HCT116 (cell line): ENCODE measurements at regions of chr2 and their contacts with region 1.

Region 1: DNA sequence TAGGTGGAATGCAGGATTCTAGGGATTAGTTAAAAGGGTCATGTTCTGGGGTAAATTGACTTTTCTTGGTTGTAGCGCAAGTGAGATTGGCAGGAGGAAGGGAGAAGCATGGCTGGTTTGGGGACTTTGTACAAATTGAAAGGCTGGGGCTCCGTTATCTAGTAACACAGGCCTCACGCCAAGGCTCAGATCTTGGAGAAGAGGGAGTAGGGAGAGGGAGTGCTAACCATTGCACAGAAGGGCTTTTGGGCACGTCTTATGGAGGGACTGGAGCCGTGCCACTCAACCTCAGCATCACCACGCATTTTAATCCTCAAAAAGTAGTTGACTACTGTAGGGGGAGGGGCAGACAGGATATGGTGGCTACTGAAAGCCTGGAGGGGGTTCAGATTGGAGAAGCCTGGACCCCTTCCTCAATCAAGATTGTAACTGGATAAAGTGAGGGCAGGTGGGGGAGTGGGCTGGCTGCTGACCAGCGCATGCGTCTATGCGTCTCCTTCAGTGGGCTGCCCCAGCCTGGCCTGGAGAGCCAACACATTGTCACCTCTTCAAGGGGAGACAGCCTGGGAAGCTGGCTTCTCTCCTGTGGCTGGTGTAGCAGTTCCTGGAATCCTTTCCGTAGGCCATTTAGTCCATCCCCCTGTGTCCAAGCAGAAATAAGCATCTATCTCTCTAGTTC is 14.3 kb downstream of the IGFBP5 start:
- DNase-seq: no peak
- ATAC-seq: no peak
- H3K4me3 ChIP-seq: no peak overlapping the region
- H3K27ac ChIP-seq: no peak overlapping the region
- H3K4me1 ChIP-seq: peaks cover 10% of the 10 kb centered on the region in 2 experiments
- H3K27me3 ChIP-seq: no peaks in the 10 kb centered on the region
- CTCF ChIP-seq: no peak
- POLR2A ChIP-seq: no peak
- RAD21 ChIP-seq: no peak

Region 2: DNA sequence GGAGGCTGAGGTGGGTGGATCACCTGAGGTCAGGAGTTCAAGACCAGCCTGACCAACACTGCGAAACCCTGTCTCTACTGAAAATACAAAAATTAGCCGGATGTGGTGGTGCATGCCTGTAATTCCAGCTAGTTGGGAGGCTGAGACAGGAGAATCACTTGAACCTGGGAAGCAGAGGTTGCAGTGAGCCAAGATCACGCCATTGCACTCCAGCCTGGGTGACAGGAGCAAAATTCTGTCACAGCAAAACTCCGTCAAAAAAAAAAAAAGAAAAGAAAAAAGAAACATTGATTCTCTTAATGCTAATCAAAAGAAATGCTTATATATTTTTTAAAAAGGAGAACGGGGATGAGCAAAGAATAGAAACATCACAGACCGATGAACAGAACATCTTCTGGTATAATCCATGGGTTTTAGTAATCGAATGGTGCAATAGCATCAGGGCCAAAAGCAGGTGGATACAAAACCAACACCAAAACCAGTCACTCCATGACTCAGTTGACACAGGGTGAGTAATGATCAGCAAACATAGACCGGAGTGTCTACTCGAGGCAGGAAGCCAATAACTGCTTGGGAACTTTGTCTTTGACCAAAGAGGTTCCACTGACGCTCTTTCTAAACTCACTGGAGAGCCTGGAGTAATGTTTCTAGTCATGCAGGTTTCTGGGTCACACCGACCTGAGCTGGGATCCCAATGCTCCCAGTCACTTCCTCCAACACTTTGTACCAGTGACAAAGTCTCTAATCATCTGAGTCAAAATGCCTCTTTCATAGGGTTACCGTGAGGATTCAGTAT is 698.8 kb before region 1 on chr2:
- CTCF ChIA-PET with region 1: no interaction called
- POLR2A ChIA-PET with region 1: no interaction called
- RAD21 ChIA-PET with region 1: no interaction called
- intact Hi-C with region 1: no loop called
- DNase-seq: peak; percentile 62
- ATAC-seq: peak; percentile 64
- H3K4me3 ChIP-seq: no peak overlapping the region
- H3K27ac ChIP-seq: no peak overlapping the region
- H3K4me1 ChIP-seq: peaks cover 0 to 17% of the 10 kb centered on the region in 2 experiments; a peak in 2 of 4 replicates
- H3K27me3 ChIP-seq: no peaks in the 10 kb centered on the region
- CTCF ChIP-seq: no peak
- POLR2A ChIP-seq: no peak
- RAD21 ChIP-seq: 0 out of 2 replicates have a peak, but pooled peaks have one; percentile 6

Region 3: GRCh38 chr2:216328347-216328746 is 352.7 kb before region 1 on chr2:
- CTCF ChIA-PET with region 1: no interaction called
- POLR2A ChIA-PET with region 1: no interaction called
- RAD21 ChIA-PET with region 1: no interaction called
- intact Hi-C with region 1: no loop called
- DNase-seq: no peak
- ATAC-seq: peak; percentile 68
- H3K4me3 ChIP-seq: no peak overlapping the region
- H3K27ac ChIP-seq: no peak overlapping the region
- H3K4me1 ChIP-seq: no peaks in the 10 kb centered on the region
- H3K27me3 ChIP-seq: no peaks in the 10 kb centered on the region; the same call in 1 of the 2 replicates
- CTCF ChIP-seq: peak; percentile 15 to 25 (median 18); a peak in 1 of 6 replicates
- POLR2A ChIP-seq: no peak
- RAD21 ChIP-seq: peak; percentile 46

Region 4: DNA sequence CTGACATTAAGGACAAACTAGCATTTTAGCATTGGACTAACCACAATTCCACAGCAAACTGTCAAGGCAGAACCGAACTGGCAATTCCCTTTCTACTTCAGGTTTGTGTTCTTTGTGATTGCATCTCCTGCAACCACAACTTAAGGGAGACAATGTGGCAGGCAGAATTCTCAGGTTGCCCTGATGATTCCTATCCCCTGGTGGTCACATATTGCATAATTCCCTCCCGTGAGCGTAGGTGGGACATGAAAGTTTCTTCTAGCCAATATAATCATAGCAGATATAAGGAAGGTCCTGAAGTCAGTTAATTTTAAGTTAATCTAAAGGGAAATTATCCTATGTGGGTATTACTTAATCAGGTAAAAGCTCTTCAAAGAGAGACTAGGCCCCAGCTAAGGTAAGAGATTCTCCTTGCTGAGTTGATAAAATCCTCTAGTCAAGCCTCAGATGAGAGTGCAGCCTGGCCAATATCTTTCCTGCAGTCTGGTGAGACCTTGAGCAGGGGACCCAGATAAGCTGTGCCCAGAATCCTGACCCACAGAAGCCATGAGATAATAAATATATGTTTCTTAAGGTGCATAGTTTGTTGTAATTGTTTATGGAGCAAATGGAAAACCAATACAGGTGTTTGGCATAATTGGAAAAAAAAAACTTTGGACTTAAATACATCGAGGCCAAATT is 224.7 kb after region 1 on chr2:
- CTCF ChIA-PET with region 1: no interaction called
- POLR2A ChIA-PET with region 1: no interaction called
- RAD21 ChIA-PET with region 1: no interaction called
- intact Hi-C with region 1: no loop called
- DNase-seq: no peak
- ATAC-seq: no peak; the same call in 1 of the 2 replicates
- H3K4me3 ChIP-seq: no peak overlapping the region
- H3K27ac ChIP-seq: no peak overlapping the region
- H3K4me1 ChIP-seq: no peaks in the 10 kb centered on the region
- H3K27me3 ChIP-seq: peaks cover 12% of the 10 kb centered on the region; the same call in 1 of the 2 replicates
- CTCF ChIP-seq: peak in 2 of 3 experiments; percentile 31 to 38; a peak in 4 of 6 replicates
- POLR2A ChIP-seq: no peak
- RAD21 ChIP-seq: no peak

Region 5: DNA sequence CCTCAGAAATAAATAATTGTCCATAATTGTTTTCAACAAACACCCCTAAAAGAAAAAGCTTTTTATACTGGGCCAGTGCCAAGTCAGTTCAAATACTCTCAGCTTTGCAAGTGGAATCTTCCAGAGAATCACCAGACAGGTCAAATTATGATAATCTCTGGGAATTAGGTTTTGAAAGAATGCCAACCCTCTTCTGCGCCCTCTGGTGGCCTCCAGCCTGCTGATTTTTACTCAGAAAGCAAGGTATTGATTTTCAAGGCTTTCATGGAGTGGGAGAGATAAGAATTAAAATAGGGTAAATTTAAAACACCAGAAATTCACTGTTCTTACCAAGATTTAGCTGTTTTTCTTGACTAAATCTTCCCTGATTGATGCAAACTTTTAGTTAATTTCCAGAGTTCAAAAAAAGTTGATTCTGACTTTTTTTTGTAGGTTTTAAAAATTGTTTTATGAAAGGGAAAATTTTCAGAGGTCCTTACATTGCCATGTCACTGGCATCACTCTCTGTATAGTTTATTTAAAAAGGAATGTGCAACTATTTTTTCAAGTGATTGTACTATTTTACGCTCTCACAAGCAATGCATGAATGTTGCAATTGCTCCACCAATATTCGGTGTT is 461.7 kb after region 1 on chr2:
- CTCF ChIA-PET with region 1: no interaction called
- POLR2A ChIA-PET with region 1: no interaction called
- RAD21 ChIA-PET with region 1: no interaction called
- intact Hi-C with region 1: loop called (anchors 1 kb)
- DNase-seq: peak; percentile 29
- ATAC-seq: peak; percentile 64
- H3K4me3 ChIP-seq: no peak overlapping the region
- H3K27ac ChIP-seq: no peak overlapping the region
- H3K4me1 ChIP-seq: no peaks in the 10 kb centered on the region
- H3K27me3 ChIP-seq: peaks cover 22% of the 10 kb centered on the region
- CTCF ChIP-seq: peak; percentile 75 to 88 (median 83); a peak in 5 of 6 replicates
- POLR2A ChIP-seq: no peak
- RAD21 ChIP-seq: peak; percentile 74

Region 6: DNA sequence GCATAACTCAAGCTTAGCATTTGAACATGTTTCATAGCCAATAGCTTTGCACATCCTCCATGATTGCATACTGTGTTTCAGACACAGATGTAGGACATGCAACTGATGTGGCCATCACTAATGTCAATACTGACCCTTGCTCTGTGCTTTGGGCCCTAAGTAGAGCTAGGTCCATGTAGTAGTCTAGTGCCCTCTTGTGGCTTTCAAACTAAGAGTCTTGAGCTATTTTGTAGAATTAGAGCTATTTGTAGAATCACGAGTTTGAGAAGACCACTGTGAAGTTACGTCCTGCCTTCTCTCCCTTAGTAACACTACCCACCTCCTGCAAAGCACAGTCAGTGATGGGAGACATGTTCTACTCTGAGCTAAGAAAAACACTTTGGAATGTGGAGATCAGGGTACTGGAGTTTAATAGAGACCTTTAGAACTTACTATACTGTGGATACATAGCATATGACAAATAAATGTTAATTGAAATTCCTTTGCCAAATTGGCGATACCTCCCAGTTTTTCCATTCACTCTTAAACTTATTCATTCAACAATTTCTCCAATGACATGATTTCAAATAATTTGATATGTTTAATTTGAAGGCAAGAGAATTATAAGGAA is 485.3 kb after region 1 on chr2:
- CTCF ChIA-PET with region 1: interaction called, 18 read pairs
- POLR2A ChIA-PET with region 1: no interaction called
- RAD21 ChIA-PET with region 1: no interaction called
- intact Hi-C with region 1: loop called (anchors 1 kb)
- DNase-seq: peak; percentile 32
- ATAC-seq: peak; percentile 76
- H3K4me3 ChIP-seq: no peak overlapping the region
- H3K27ac ChIP-seq: no peak overlapping the region
- H3K4me1 ChIP-seq: peaks cover 0 to 6% of the 10 kb centered on the region in 2 experiments; a peak in 2 of 4 replicates
- H3K27me3 ChIP-seq: peaks cover 27% of the 10 kb centered on the region
- CTCF ChIP-seq: peak; percentile 49 to 65 (median 61); a peak in 5 of 6 replicates
- POLR2A ChIP-seq: no peak
- RAD21 ChIP-seq: peak; percentile 74

Region 7: GRCh38 chr2:217685255-217685605 is 1004.1 kb after region 1 on chr2:
- CTCF ChIA-PET with region 1: no interaction called
- POLR2A ChIA-PET with region 1: no interaction called
- RAD21 ChIA-PET with region 1: no interaction called
- intact Hi-C with region 1: no loop called
- DNase-seq: peak; percentile 26
- ATAC-seq: peak; percentile 53; the same call in 1 of the 2 replicates
- H3K4me3 ChIP-seq: no peak overlapping the region
- H3K27ac ChIP-seq: no peak overlapping the region
- H3K4me1 ChIP-seq: no peaks in the 10 kb centered on the region
- H3K27me3 ChIP-seq: peaks cover 20% of the 10 kb centered on the region
- CTCF ChIP-seq: no peak
- POLR2A ChIP-seq: no peak
- RAD21 ChIP-seq: no peak